IMR-90 (cell line): ENCODE measurements at regions of chr5 and their contacts with region 1.

Region 1: DNA sequence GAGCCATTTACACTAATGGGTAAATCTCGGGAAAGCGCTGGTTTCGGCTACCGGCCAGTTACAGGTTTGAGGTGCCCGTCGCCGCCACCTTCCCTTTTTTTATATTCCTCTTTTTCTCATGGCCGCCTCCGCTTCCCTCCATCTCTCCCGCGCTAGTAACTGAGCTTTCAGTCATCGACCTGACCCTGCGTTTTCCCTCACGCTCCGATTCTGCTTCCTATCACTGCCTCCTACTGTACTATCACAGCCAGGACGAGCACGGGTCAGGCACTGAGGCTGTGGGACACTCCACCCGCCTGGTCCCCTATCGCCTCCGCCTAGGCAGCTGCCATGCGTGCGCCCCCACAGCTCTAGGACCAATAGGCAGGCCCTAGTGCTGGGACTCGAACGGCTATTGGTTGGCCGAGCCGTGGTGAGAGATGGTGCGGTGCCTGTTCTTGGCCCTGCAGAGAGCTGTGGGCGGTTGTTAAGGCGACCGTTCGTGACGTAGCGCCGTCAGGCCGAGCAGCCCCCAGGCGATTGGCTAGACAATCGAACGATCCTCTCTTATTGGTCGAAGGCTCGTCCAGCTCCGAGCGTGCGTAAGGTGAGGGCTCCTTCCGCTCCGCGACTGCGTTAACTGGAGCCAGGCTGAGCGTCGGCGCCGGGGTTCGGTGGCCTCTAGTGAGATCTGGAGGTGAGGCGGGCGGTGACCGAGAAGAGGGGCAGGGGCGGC is at the start of gene HMGCR:
- DNase-seq: peak; percentile 100
- ATAC-seq: peak; percentile 97
- H3K4me3 ChIP-seq: peak within 1 kb of the TSS; percentile 79
- H3K27ac ChIP-seq: peak within 1 kb of the TSS; percentile 29
- H3K4me1 ChIP-seq: no peaks in the 10 kb centered on the region; the same call in 1 of the 2 replicates
- H3K27me3 ChIP-seq: no peaks in the 10 kb centered on the region
- CTCF ChIP-seq: peak; percentile 38
- POLR2A ChIP-seq: peak; percentile 92
- RAD21 ChIP-seq: peak; percentile 39
- total RNA-seq, gene HMGCR: 48.6 and 89.7 TPM in 2 replicates

Region 2: DNA sequence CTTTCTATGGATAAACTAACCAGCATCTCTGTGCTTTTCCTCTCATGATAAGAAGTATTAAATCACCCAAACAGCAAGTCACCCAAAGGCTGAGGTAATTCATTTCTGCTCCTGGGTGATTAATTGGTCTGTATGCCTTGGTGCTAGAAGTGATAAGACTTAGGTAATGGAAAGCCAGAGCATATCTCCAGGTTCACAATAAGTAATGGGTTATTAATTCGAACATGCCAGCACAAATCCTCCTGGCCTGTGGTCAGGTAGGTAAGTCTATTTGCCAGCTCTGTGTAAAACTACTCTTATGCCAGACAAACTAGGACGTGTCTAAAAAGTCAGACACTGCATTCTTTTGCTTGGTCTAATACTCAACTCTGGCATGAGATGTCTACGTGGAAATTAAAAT is 685.1 kb before region 1 on chr5:
- CTCF ChIA-PET with region 1: no interaction called
- POLR2A ChIA-PET with region 1: no interaction called
- dilution Hi-C with region 1: no loop called
- in situ Hi-C with region 1: no loop called
- intact Hi-C with region 1: no loop called
- DNase-seq: no peak
- ATAC-seq: no peak
- H3K4me3 ChIP-seq: no peak overlapping the region
- H3K27ac ChIP-seq: no peak overlapping the region
- H3K4me1 ChIP-seq: peaks cover 4% of the 10 kb centered on the region; the same call in 1 of the 2 replicates
- H3K27me3 ChIP-seq: no peaks in the 10 kb centered on the region
- CTCF ChIP-seq: no peak
- POLR2A ChIP-seq: no peak
- RAD21 ChIP-seq: no peak

Region 3: GRCh38 chr5:74927336-74927735 is 409.4 kb before region 1 on chr5:
- CTCF ChIA-PET with region 1: no interaction called
- POLR2A ChIA-PET with region 1: no interaction called
- dilution Hi-C with region 1: no loop called
- in situ Hi-C with region 1: no loop called
- intact Hi-C with region 1: loop called (anchors 5 kb)
- DNase-seq: no peak
- ATAC-seq: no peak
- H3K4me3 ChIP-seq: no peak overlapping the region
- H3K27ac ChIP-seq: no peak overlapping the region
- H3K4me1 ChIP-seq: peaks cover 3% of the 10 kb centered on the region
- H3K27me3 ChIP-seq: no peaks in the 10 kb centered on the region
- CTCF ChIP-seq: no peak
- POLR2A ChIP-seq: no peak
- RAD21 ChIP-seq: no peak

Region 4: DNA sequence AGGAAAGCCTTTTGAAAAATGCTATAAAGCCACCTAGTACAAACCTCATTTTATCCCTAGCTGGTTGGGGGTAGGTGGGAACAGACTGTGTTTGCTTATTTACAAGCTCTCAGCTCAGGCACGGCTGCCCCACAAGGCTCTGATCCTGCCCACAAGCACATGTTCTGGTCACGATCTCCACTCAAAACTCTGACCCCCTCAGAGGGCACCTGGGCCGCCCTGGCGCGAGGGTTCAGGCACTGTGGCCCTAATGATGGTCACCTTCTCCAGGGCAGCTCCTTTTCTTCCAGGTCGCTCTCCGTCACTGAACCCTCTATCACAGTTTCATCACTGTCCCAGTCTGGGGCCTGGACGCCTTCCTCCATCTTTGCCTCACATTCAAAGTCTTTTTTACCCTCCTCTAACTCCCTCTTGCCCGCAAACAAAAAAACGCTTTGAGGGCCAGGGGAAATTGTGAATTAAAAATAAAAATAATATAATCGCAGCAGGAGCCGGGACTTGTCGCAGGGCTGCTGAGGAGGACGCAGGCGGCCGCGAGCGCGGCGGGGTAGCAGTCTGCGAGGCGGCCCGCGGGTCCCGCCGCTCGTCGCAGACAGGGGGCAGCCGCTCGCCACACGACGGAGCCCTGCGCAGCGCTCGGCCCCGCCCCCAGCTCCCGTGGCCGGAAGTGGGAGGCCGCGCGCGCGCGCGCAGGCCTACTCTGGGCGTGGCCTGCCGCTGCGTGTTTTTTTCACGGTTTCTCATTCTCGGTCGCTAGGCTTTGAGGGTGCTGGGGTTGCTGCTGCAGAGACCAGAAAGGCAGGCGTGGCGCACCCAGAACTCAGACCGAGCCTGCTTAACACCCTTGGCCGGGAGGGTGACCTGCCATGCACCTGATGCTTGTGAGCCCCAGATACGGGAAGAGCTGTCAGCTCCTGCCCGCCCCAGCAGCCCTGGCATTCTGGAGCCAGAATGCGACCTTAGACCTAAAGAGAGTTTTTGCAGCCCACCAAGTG is 100.2 kb before region 1 on chr5 and contains the start of gene ANKRD31:
- CTCF ChIA-PET with region 1: interaction called, 11 read pairs
- POLR2A ChIA-PET with region 1: no interaction called
- dilution Hi-C with region 1: no loop called
- in situ Hi-C with region 1: no loop called
- intact Hi-C with region 1: loop called (anchors 1 kb)
- DNase-seq: peak; percentile 66
- ATAC-seq: peak; percentile 100
- H3K4me3 ChIP-seq: peak within 1 kb of the TSS; percentile 87
- H3K27ac ChIP-seq: peak within 1 kb of the TSS; percentile 52
- H3K4me1 ChIP-seq: peaks cover 3% of the 10 kb centered on the region
- H3K27me3 ChIP-seq: no peaks in the 10 kb centered on the region
- CTCF ChIP-seq: peak; percentile 83
- POLR2A ChIP-seq: peak; percentile 46; the same call in 1 of the 2 replicates
- RAD21 ChIP-seq: peak; percentile 76
- total RNA-seq, gene ANKRD31: under 0.01 TPM in 2 replicates

Region 5: DNA sequence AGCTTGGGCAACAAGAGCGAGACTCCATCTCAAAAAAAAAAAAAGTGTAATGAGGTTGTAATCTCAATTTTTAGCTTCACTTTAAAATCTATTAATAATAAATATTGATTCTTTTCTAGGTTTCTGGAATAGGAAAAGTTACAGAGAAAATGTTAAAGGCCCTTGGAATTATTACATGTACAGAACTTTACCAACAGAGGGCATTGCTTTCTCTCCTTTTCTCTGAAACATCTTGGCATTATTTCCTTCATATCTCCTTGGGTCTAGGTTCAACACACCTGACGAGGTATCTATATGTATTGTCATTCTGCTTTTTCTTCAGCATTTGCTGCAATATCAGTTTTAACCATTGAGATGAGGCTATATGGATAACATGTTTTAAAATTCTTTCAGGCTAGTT is 247.9 kb after region 1 on chr5:
- CTCF ChIA-PET with region 1: no interaction called
- POLR2A ChIA-PET with region 1: no interaction called
- dilution Hi-C with region 1: no loop called
- in situ Hi-C with region 1: no loop called
- intact Hi-C with region 1: loop called (anchors 10 kb)
- DNase-seq: no peak
- ATAC-seq: no peak
- H3K4me3 ChIP-seq: no peak overlapping the region
- H3K27ac ChIP-seq: no peak overlapping the region
- H3K4me1 ChIP-seq: no peaks in the 10 kb centered on the region
- H3K27me3 ChIP-seq: no peaks in the 10 kb centered on the region
- CTCF ChIP-seq: peak; percentile 28
- POLR2A ChIP-seq: no peak
- RAD21 ChIP-seq: peak; percentile 29; the same call in 1 of the 2 replicates